ENCODE measurements at regions of chr11 and their contacts with region 1.

Region 1: DNA sequence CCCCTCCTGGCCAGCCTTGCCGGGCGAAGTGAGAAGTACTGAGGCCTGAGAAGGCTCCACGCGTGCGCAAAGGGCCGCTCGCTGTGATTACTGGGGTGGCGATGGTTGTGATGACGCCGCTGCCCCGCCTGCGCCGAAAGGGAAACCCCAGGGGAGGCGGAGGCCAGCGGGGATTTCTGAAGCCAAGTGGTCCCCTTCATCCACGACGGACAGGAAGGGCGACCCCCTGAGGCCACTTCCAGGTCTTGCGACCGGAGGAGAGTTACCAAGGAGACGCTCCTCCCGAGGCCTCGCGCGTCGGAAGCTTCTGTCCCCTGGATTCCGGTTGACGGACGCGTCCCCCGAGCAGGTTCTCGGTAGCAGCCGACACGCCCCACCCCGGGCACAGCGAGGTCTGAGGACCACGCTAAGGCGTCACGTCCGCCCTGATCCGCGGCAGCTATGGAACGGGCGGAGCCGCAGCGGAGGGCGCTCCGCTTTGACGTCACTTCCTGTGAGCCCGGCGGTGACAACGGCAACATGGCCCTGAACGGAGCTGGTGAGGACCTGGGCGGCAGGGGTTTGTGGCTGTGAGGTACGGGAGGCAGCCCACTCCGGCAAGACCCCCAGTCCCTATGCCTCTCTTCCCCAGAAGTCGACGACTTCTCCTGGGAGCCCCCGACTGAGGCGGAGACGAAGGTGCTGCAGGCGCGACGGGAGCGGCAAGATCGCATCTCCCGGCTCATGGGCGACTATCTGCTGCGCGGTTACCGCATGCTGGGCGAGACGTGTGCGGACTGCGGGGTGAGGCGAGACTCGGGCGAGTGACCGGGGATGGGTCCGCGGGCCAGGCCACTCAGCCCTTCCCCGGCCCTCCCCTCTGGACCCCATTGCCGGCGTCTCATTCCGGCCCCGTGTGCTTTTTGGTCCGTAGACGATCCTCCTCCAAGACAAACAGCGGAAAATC is at the start of gene ZNRD2:
- DNase-seq: peak; percentile 96 to 99
- ATAC-seq: peak; percentile 59 to 86 (median 70)
- H3K4me3 ChIP-seq: peak within 1 kb of the TSS; percentile 54
- H3K4me3 Mint-ChIP-seq: peak within 1 kb of the TSS; percentile 98
- H3K27ac ChIP-seq: peak within 1 kb of the TSS; percentile 97
- H3K27ac Mint-ChIP-seq: peak within 1 kb of the TSS; percentile 99
- H3K4me1 ChIP-seq: peaks cover 85% of the 10 kb centered on the region
- H3K4me1 Mint-ChIP-seq: peaks cover 64 to 86% of the 10 kb centered on the region in 2 donors
- H3K27me3 ChIP-seq: no peaks in the 10 kb centered on the region
- H3K27me3 Mint-ChIP-seq: no peaks in the 10 kb centered on the region
- CTCF ChIP-seq: peak; percentile 29
- total RNA-seq, gene ZNRD2: 40.9 to 64.1 (median 60.0) TPM

Region 2: DNA sequence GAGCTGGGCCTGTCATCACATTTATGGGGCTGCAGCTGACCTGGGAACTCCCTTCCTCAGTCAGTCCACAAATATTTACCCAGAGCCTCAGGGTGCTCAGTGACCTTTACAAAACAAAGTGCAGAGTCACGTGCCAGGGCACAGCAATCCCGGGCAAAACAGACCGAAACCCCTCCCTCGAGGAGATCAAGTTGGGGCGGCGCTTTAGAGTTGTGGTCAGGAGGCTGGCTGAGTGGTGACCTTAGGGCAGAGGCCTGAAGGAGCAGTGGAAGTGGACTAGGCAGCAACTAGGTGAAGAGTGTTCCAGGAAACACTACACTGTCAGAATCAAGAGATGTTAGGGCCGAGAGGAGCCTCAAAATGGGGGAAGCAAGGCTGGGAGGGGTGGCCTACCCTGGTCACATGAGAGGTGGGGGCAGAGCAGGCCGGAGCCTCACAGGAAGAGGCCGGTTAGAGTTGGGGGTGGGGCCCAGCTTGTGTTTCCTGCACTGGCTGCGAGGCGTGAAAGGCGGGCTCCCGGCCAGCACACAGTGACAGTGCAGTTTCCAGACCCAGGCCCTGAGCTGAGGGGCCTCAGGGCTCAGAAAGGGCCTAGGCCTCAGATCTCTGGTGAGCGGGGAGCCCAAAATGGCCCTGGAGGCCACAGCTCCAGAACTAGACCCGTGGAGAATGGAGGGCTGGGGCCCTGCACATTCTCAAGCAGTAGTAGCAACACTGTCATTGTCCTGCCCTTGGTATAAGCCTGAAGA is 151.4 kb before region 1 on chr11:
- intact Hi-C with region 1: loop called (anchors 5 kb)
- DNase-seq: peak; percentile 84 to 89
- ATAC-seq: peak; percentile 49 to 77 (median 61)
- H3K4me3 ChIP-seq: peak overlapping the region; percentile 39
- H3K4me3 Mint-ChIP-seq: peak overlapping the region; percentile 88
- H3K27ac ChIP-seq: peak overlapping the region; percentile 100
- H3K27ac Mint-ChIP-seq: peak overlapping the region; percentile 98 to 100
- H3K4me1 ChIP-seq: peaks cover 69% of the 10 kb centered on the region
- H3K4me1 Mint-ChIP-seq: peaks cover 69 to 79% of the 10 kb centered on the region in 2 donors
- H3K27me3 ChIP-seq: no peaks in the 10 kb centered on the region
- H3K27me3 Mint-ChIP-seq: peaks cover 0 to 5% of the 10 kb centered on the region in 2 donors
- CTCF ChIP-seq: no peak

Region 3: GRCh38 chr11:65546217-65546958 is 23.9 kb before region 1 on chr11:
- intact Hi-C with region 1: loop called (anchors 1 kb)
- DNase-seq: peak; percentile 96 to 99
- ATAC-seq: peak; percentile 92 to 97 (median 95)
- H3K4me3 ChIP-seq: peak overlapping the region; percentile 34
- H3K4me3 Mint-ChIP-seq: peak overlapping the region; percentile 81
- H3K27ac ChIP-seq: peak overlapping the region; percentile 71
- H3K27ac Mint-ChIP-seq: peak overlapping the region; percentile 77 to 87
- H3K4me1 ChIP-seq: peaks cover 36% of the 10 kb centered on the region
- H3K4me1 Mint-ChIP-seq: peaks cover 23 to 51% of the 10 kb centered on the region in 2 donors
- H3K27me3 ChIP-seq: no peaks in the 10 kb centered on the region
- H3K27me3 Mint-ChIP-seq: no peaks in the 10 kb centered on the region
- CTCF ChIP-seq: no peak

Region 4: GRCh38 chr11:65615229-65615941 is 45.1 kb after region 1 on chr11 and contains the start of gene PCNX3:
- intact Hi-C with region 1: loop called (anchors 1 kb)
- DNase-seq: peak; percentile 99 to 100
- ATAC-seq: peak; percentile 84 to 95 (median 85)
- H3K4me3 ChIP-seq: peak within 1 kb of the TSS; percentile 86
- H3K4me3 Mint-ChIP-seq: peak within 1 kb of the TSS; percentile 98
- H3K27ac ChIP-seq: peak within 1 kb of the TSS; percentile 97
- H3K27ac Mint-ChIP-seq: peak within 1 kb of the TSS; percentile 96 to 97
- H3K4me1 ChIP-seq: peaks cover 58% of the 10 kb centered on the region
- H3K4me1 Mint-ChIP-seq: peaks cover 32 to 52% of the 10 kb centered on the region in 2 donors
- H3K27me3 ChIP-seq: no peaks in the 10 kb centered on the region
- H3K27me3 Mint-ChIP-seq: no peaks in the 10 kb centered on the region
- CTCF ChIP-seq: no peak
- total RNA-seq, gene PCNX3: 101 to 105 (median 102) TPM

Region 5: GRCh38 chr11:65652511-65653231 is 82.4 kb after region 1 on chr11:
- intact Hi-C with region 1: loop called (anchors 1 kb)
- DNase-seq: peak; percentile 98
- ATAC-seq: peak; percentile 78 to 95 (median 80)
- H3K4me3 ChIP-seq: peak overlapping the region; percentile 54
- H3K4me3 Mint-ChIP-seq: peak overlapping the region; percentile 95
- H3K27ac ChIP-seq: peak overlapping the region; percentile 95
- H3K27ac Mint-ChIP-seq: peak overlapping the region; percentile 97 to 99
- H3K4me1 ChIP-seq: peaks cover 49% of the 10 kb centered on the region
- H3K4me1 Mint-ChIP-seq: peaks cover 51 to 73% of the 10 kb centered on the region in 2 donors
- H3K27me3 ChIP-seq: no peaks in the 10 kb centered on the region
- H3K27me3 Mint-ChIP-seq: no peaks in the 10 kb centered on the region
- CTCF ChIP-seq: no peak